Heart left ventricle (tissue), 16 donors: ENCODE measurements at regions of chr19 and their contacts with region 1.

Region 1: GRCh38 chr19:2722541-2723344 is 1.6 kb upstream of the DIRAS1 start:
- DNase-seq: peak; percentile 67 to 90 (median 85)
- ATAC-seq: peak; percentile 81 to 88 (median 85)
- H3K4me3 ChIP-seq: no peak overlapping the region
- H3K27ac ChIP-seq: peak overlapping the region in 11 of 12 donors; percentile 77 to 95 (median 90)
- H3K4me1 ChIP-seq: peaks cover 0 to 42% (median 13%) of the 10 kb centered on the region in 12 donors
- H3K27me3 ChIP-seq: peaks cover 9 to 52% (median 23%) of the 10 kb centered on the region in 9 donors
- CTCF ChIP-seq: no peak
- POLR2A ChIP-seq: peak in 1 of 2 donors; percentile 59

Region 2: GRCh38 chr19:2702162-2703076 is 20.3 kb before region 1 on chr19 and contains the start of gene GNG7:
- intact Hi-C with region 1: loop called in 1 of 10 experiments (anchors 2 kb)
- DNase-seq: peak; percentile 92 to 97 (median 94)
- ATAC-seq: peak; percentile 94 to 100 (median 99)
- H3K4me3 ChIP-seq: peak within 1 kb of the TSS; percentile 20 to 81 (median 58)
- H3K27ac ChIP-seq: peak within 1 kb of the TSS in 7 of 12 donors; percentile 34 to 85 (median 55)
- H3K4me1 ChIP-seq: peaks cover 0 to 31% (median 2%) of the 10 kb centered on the region in 12 donors
- H3K27me3 ChIP-seq: peaks cover 0 to 9% (median 0%) of the 10 kb centered on the region in 9 donors
- CTCF ChIP-seq: no peak
- POLR2A ChIP-seq: peak; percentile 86 to 96
- total RNA-seq, gene GNG7: 13.9 to 46.4 (median 32.5) TPM